IMR-90 (cell line): ENCODE measurements at regions of chr14 and their contacts with region 1.

Region 1: GRCh38 chr14:61025251-61026223 is 44.5 kb downstream of the SLC38A6 start:
- DNase-seq: peak; percentile 80
- ATAC-seq: peak; percentile 81
- H3K4me3 ChIP-seq: no peak overlapping the region
- H3K27ac ChIP-seq: peak overlapping the region; percentile 24; the same call in 1 of the 2 replicates
- H3K4me1 ChIP-seq: peaks cover 3% of the 10 kb centered on the region; the same call in 1 of the 2 replicates
- H3K27me3 ChIP-seq: no peaks in the 10 kb centered on the region
- CTCF ChIP-seq: peak; percentile 84
- POLR2A ChIP-seq: no peak
- RAD21 ChIP-seq: peak; percentile 81

Region 2: GRCh38 chr14:60622917-60623257 is 402.6 kb before region 1 on chr14:
- CTCF ChIA-PET with region 1: interaction called, 4 read pairs
- POLR2A ChIA-PET with region 1: no interaction called
- dilution Hi-C with region 1: loop called (anchors 25 kb)
- in situ Hi-C with region 1: no loop called
- intact Hi-C with region 1: loop called (anchors 1 kb)
- DNase-seq: peak; percentile 70
- ATAC-seq: no peak
- H3K4me3 ChIP-seq: no peak overlapping the region
- H3K27ac ChIP-seq: peak overlapping the region; percentile 53; the same call in 1 of the 2 replicates
- H3K4me1 ChIP-seq: peaks cover 8% of the 10 kb centered on the region
- H3K27me3 ChIP-seq: no peaks in the 10 kb centered on the region
- CTCF ChIP-seq: no peak
- POLR2A ChIP-seq: no peak
- RAD21 ChIP-seq: no peak

Region 3: DNA sequence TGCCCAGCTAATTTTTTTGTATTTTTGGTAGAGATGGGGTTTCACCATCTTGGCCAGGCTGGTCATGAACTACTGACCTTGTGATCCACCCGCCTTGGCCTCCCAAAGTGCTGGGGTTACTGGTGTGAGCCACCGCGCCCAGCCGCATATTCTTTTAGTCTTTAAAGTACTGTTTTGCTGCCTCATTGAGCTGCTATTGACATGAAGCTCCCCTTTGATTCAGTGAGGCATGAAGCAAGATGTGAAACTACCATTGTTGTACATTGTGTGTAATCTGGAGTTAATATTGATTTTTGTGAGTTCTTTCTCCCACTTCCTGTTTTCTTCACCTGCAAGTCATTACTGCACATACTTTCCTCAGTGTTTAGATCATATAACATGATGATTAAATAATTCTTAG is 210.2 kb before region 1 on chr14:
- CTCF ChIA-PET with region 1: no interaction called
- POLR2A ChIA-PET with region 1: interaction called, 15 read pairs
- dilution Hi-C with region 1: no loop called
- in situ Hi-C with region 1: no loop called
- intact Hi-C with region 1: no loop called
- DNase-seq: no peak
- ATAC-seq: no peak
- H3K4me3 ChIP-seq: no peak overlapping the region
- H3K27ac ChIP-seq: no peak overlapping the region
- H3K4me1 ChIP-seq: peaks cover 2% of the 10 kb centered on the region; the same call in 1 of the 2 replicates
- H3K27me3 ChIP-seq: no peaks in the 10 kb centered on the region
- CTCF ChIP-seq: no peak
- POLR2A ChIP-seq: no peak
- RAD21 ChIP-seq: no peak

Region 4: GRCh38 chr14:61147831-61148549 is 122.5 kb after region 1 on chr14:
- CTCF ChIA-PET with region 1: no interaction called
- POLR2A ChIA-PET with region 1: no interaction called
- dilution Hi-C with region 1: no loop called
- in situ Hi-C with region 1: no loop called
- intact Hi-C with region 1: loop called (anchors 5 kb)
- DNase-seq: peak; percentile 100
- ATAC-seq: peak; percentile 60
- H3K4me3 ChIP-seq: no peak overlapping the region
- H3K27ac ChIP-seq: peak overlapping the region; percentile 99
- H3K4me1 ChIP-seq: peaks cover 36% of the 10 kb centered on the region
- H3K27me3 ChIP-seq: no peaks in the 10 kb centered on the region
- CTCF ChIP-seq: no peak
- POLR2A ChIP-seq: peak; percentile 22; the same call in 1 of the 2 replicates
- RAD21 ChIP-seq: no peak